Common myeloid progenitor, CD34-positive (primary cell): ENCODE measurements at regions of chr18 and their contacts with region 1.

Region 1: GRCh38 chr18:63518178-63519012 is 23.8 kb upstream of the SERPINB12 start:
- DNase-seq: peak; percentile 75 to 85 (median 83)
- H3K4me3 ChIP-seq: peak overlapping the region in 1 of 7 experiments; percentile 41
- H3K27ac ChIP-seq: no peak overlapping the region
- H3K4me1 ChIP-seq: no peaks in the 10 kb centered on the region
- H3K27me3 ChIP-seq: no peaks in the 10 kb centered on the region

Region 2: GRCh38 chr18:63422087-63422809 is 96.1 kb before region 1 on chr18 and contains the start of gene VPS4B:
- CTCF ChIA-PET with region 1: no interaction called
- POLR2A ChIA-PET with region 1: no interaction called
- DNase-seq: peak; percentile 100
- H3K4me3 ChIP-seq: peak within 1 kb of the TSS; percentile 82 to 100 (median 97)
- H3K27ac ChIP-seq: peak within 1 kb of the TSS; percentile 84 to 96
- H3K4me1 ChIP-seq: peaks cover 6 to 18% (median 14%) of the 10 kb centered on the region in 4 experiments
- H3K27me3 ChIP-seq: no peaks in the 10 kb centered on the region

Region 3: GRCh38 chr18:63451799-63452660 is 66.4 kb before region 1 on chr18:
- CTCF ChIA-PET with region 1: no interaction called
- POLR2A ChIA-PET with region 1: no interaction called
- DNase-seq: peak; percentile 19 to 70 (median 51)
- H3K4me3 ChIP-seq: peak overlapping the region in 1 of 7 experiments; percentile 10
- H3K27ac ChIP-seq: no peak overlapping the region
- H3K4me1 ChIP-seq: peaks cover 0 to 21% (median 12%) of the 10 kb centered on the region in 4 experiments
- H3K27me3 ChIP-seq: no peaks in the 10 kb centered on the region

Region 4: GRCh38 chr18:63528863-63529492 is 10.6 kb after region 1 on chr18:
- CTCF ChIA-PET with region 1: interaction called, 16 read pairs
- POLR2A ChIA-PET with region 1: no interaction called
- DNase-seq: no peak
- H3K4me3 ChIP-seq: no peak overlapping the region
- H3K27ac ChIP-seq: no peak overlapping the region
- H3K4me1 ChIP-seq: no peaks in the 10 kb centered on the region
- H3K27me3 ChIP-seq: no peaks in the 10 kb centered on the region

Region 5: DNA sequence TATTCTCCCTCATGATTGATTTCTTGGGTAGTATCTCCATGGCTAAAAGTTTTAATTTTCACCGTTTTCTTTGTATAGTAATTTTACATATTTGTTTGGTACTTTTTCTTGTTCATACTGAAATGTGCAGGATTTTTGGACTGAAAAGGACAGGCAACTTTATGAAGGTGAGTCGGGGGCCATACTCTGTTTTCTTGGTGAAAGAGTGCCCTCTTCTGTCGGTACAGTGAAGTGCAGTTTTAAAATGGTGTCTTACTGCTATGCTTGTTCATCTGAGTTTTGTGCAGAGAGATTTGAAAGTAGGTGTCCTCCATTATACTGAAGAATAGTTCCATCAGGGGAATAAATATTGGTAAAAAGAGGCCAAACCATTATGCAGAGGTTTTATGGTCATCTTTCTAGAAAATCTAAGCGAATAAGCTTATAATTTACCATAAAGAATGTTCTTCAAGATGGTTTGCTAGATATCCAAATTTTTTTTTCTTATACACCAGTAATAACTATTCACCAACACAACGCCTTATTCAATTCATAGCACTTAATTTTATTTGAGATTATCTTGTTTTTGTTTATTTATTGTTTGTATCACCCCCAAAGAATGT is 60.1 kb after region 1 on chr18:
- CTCF ChIA-PET with region 1: interaction called, 56 read pairs
- POLR2A ChIA-PET with region 1: no interaction called
- DNase-seq: peak; percentile 53 to 67 (median 64)
- H3K4me3 ChIP-seq: no peak overlapping the region
- H3K27ac ChIP-seq: no peak overlapping the region
- H3K4me1 ChIP-seq: no peaks in the 10 kb centered on the region
- H3K27me3 ChIP-seq: no peaks in the 10 kb centered on the region

Region 6: DNA sequence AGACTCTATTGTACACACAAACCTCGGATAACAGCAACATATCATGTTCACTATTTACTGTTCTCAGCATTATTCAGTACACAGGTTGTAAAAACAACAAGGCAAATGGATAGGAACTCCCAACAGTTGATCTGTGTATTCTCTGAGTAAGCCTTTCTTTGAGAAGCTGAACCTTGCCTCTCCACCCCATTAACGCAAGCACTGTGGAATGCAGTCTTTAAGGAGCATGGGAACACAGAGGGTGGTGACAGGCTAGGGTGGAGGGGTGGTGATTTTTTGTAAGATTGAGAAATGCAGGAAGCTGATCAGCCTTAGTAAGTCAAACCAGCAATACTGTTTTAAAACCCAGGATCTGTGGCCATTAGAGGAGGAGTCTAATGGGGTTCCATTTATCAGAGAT is 164.8 kb after region 1 on chr18:
- CTCF ChIA-PET with region 1: no interaction called
- POLR2A ChIA-PET with region 1: no interaction called
- DNase-seq: no peak
- H3K4me3 ChIP-seq: no peak overlapping the region
- H3K27ac ChIP-seq: no peak overlapping the region
- H3K4me1 ChIP-seq: no peaks in the 10 kb centered on the region
- H3K27me3 ChIP-seq: peaks cover 0 to 3% (median 0%) of the 10 kb centered on the region in 5 experiments

Region 7: DNA sequence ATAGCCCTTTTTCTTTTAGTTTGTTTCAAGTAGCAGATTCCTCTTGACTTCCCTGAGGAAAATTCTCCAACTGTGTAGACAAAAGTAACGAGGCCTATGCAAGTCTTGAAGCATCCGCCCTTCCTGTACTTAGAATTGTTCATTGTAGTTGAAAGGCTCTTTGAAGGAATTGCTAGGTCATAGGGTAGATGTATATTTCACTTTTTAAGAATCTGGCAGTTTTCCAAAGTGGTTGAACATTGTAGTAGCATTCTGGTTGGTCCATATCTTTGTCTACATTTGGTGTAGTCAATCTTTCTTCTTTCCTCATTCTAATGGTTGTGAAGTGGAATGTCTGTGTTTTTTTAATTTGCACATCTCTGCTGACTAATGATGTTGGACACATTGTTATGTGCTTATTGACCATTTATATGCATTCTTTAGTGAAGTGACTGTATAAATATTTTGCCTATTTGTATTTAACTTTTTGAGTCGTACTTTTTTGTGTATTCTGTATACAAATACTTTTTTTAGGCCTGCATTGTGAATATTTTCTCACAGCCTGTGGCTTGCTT is 178.8 kb after region 1 on chr18:
- CTCF ChIA-PET with region 1: no interaction called
- POLR2A ChIA-PET with region 1: no interaction called
- DNase-seq: no peak
- H3K4me3 ChIP-seq: no peak overlapping the region
- H3K27ac ChIP-seq: no peak overlapping the region
- H3K4me1 ChIP-seq: no peaks in the 10 kb centered on the region
- H3K27me3 ChIP-seq: no peaks in the 10 kb centered on the region

Region 8: GRCh38 chr18:63848159-63848558 is 329.8 kb after region 1 on chr18:
- CTCF ChIA-PET with region 1: interaction called, 169 read pairs
- POLR2A ChIA-PET with region 1: no interaction called
- DNase-seq: peak; percentile 73 to 87 (median 81)
- H3K4me3 ChIP-seq: no peak overlapping the region
- H3K27ac ChIP-seq: no peak overlapping the region
- H3K4me1 ChIP-seq: no peaks in the 10 kb centered on the region
- H3K27me3 ChIP-seq: no peaks in the 10 kb centered on the region